ENCODE measurements at regions of chr15 and their contacts with region 1.

Region 1: DNA sequence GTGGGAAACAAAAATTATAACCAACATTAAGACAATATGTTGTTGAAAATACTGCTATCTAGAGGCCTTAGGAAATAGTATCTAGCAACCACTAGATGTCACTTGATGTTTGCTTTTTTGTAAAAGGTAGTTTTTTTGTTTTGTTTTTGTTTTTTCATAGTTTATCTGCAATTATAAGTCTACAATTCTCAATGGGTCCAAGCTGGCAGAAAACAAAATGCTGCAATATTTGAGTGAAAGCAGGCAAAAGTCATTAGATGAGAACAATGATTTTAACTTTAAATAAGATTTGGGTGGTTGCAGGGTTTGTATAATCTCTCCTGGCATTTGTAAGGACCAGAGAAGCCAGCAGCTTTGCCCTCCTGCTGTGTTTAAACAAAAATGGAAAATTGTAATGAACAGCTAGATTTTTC is 27.0 kb downstream of the DUT start:
- DNase-seq: no peak
- H3K4me3 ChIP-seq: peak overlapping the region; percentile 17 to 42
- H3K27ac ChIP-seq: peak overlapping the region; percentile 47 to 56
- H3K4me1 ChIP-seq: peaks cover 0 to 21% of the 10 kb centered on the region in 2 donors
- H3K27me3 ChIP-seq: no peaks in the 10 kb centered on the region
- CTCF ChIP-seq: peak; percentile 35 to 69 (median 44)

Region 2: GRCh38 chr15:48794697-48795134 is 436.5 kb after region 1 on chr15:
- intact Hi-C with region 1: loop called (anchors 5 kb)
- DNase-seq: no peak
- H3K4me3 ChIP-seq: no peak overlapping the region
- H3K27ac ChIP-seq: no peak overlapping the region
- H3K4me1 ChIP-seq: no peaks in the 10 kb centered on the region
- H3K27me3 ChIP-seq: no peaks in the 10 kb centered on the region
- CTCF ChIP-seq: no peak